Colonic mucosa (tissue), 4 donors: ENCODE measurements at regions of chr17 and their contacts with region 1.

Region 1: GRCh38 chr17:58317421-58318064 is 11.1 kb downstream of the TSPOAP1 start:
- DNase-seq: peak; percentile 64
- H3K4me3 ChIP-seq: no peak overlapping the region
- H3K27ac ChIP-seq: no peak overlapping the region
- H3K4me1 ChIP-seq: no peaks in the 10 kb centered on the region
- H3K27me3 ChIP-seq: no peaks in the 10 kb centered on the region
- CTCF ChIP-seq: peak; percentile 77

Region 2: GRCh38 chr17:58447039-58447975 is 129.8 kb after region 1 on chr17:
- intact Hi-C with region 1: loop called (anchors 1 kb)
- DNase-seq: peak; percentile 77
- H3K4me3 ChIP-seq: no peak overlapping the region
- H3K27ac ChIP-seq: no peak overlapping the region
- H3K4me1 ChIP-seq: no peaks in the 10 kb centered on the region
- H3K27me3 ChIP-seq: no peaks in the 10 kb centered on the region
- CTCF ChIP-seq: peak; percentile 71

Region 3: DNA sequence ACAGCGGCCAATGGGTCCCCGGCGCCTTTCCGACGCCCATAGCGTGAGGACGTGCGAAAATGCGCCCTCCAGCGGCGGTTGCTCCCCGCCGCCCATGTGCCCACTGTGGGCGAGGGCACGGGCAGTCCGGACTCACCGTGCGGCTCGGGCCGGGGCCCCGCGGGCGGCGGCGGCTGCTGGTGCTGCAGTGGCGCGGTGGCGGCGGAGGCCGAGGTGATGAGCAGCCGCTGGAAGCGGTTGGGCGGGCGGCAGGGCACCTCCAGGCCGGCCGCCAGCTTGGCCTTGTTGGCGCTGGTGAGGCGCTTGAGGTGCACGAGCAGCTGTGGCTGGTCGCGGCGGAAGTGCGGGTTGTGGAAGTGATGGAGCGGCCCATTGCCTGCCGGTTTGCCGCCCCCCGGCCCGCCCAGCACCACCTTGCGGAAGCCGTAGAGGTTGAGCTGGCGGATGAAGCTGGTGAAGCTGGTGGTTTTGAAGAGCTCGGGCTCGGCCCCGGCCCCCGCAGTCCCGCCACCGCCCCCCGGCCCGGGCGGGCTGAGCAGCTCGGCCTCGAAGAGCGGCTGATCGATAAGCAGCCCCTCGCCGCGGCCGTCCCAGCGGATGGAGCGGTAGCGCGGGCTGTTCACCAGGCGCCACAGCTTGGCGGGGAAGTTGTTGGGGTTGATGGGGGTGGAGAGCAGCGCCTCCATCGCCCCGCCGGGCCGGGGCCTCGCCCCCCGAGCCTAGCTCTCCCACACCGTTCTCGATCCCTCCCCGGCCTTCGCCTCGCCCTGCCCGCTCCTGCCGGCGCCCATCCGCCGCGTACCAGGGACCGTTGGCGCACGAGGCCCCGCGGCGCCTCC is 170.3 kb after region 1 on chr17 and contains the start of gene HSF5:
- intact Hi-C with region 1: no loop called
- DNase-seq: no peak
- H3K4me3 ChIP-seq: peak within 1 kb of the TSS; percentile 13
- H3K27ac ChIP-seq: no peak within 1 kb of the TSS
- H3K4me1 ChIP-seq: no peaks in the 10 kb centered on the region
- H3K27me3 ChIP-seq: no peaks in the 10 kb centered on the region
- CTCF ChIP-seq: no peak
- total RNA-seq, gene HSF5: 0.07 TPM in 1 of 2 donors, not detected in the other